ENCODE measurements at regions of chr19 and their contacts with region 1.

Region 1: DNA sequence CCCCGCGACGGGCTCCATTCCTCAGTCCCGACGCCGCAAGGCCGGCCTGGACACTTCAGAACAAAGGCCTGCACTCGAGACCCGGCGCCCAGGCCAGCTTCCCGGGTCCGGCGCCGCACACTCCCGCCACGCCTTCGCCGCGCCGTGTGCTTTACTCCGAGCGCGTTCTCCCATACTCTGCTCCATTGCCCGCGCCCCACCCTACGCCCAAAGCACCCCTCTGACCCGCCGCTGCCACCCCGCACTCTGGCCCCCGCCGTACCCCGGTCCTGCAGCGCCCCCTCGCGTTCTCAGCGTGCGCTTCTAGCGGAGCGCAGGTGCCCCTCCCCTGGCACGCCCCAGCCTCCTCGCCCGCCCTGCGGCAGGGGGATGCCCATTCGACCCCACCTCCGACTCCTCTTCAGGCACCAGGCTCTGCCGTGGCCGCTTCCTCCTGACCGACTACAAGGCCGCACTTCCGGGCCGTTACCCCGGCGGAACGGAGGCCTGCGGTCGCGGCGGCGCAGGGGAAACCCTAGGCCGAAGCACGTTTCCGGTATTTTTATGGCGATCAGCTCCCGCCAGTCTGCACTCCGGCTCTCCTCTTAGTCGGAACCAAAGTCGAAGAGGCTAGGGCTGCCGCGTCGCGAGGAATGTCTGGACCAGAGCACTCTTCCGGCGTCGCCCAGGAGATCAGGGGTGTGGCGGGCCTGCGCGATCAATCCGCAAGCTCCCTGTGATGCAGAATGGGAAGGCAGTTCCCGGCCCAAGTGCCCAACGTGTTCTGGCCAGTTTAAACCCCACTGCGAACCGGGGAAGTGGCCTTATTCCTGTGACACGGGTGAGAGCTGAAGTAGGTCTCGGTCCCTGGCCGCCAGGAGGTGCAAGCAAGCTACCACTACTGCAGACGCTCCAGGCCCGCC is at the start of gene ZBTB45:
- DNase-seq: peak; percentile 73 to 96 (median 87)
- ATAC-seq: peak; percentile 80
- H3K4me3 ChIP-seq: peak within 1 kb of the TSS; percentile 63 to 91
- H3K4me3 Mint-ChIP-seq: peak within 1 kb of the TSS; percentile 95
- H3K27ac ChIP-seq: peak within 1 kb of the TSS; percentile 74 to 90
- H3K27ac Mint-ChIP-seq: peak within 1 kb of the TSS; percentile 97
- H3K4me1 ChIP-seq: peaks cover 23% of the 10 kb centered on the region
- H3K4me1 Mint-ChIP-seq: peaks cover 43% of the 10 kb centered on the region
- H3K27me3 ChIP-seq: no peaks in the 10 kb centered on the region
- H3K27me3 Mint-ChIP-seq: no peaks in the 10 kb centered on the region
- CTCF ChIP-seq: peak; percentile 57
- total RNA-seq, gene ZBTB45: 4.8 to 5.6 TPM

Region 2: GRCh38 chr19:58182989-58183816 is 336.4 kb before region 1 on chr19 and contains the start of gene ZNF274:
- CTCF ChIA-PET with region 1: interaction called, 3 read pairs
- POLR2A ChIA-PET with region 1: interaction called, 5 read pairs
- intact Hi-C with region 1: loop called in 1 of 2 experiments (anchors 1 kb)
- DNase-seq: peak; percentile 88 to 96 (median 94)
- ATAC-seq: peak; percentile 86
- H3K4me3 ChIP-seq: peak within 1 kb of the TSS; percentile 90 to 94
- H3K4me3 Mint-ChIP-seq: peak within 1 kb of the TSS; percentile 91
- H3K27ac ChIP-seq: peak within 1 kb of the TSS; percentile 99 to 100
- H3K27ac Mint-ChIP-seq: peak within 1 kb of the TSS; percentile 100
- H3K4me1 ChIP-seq: peaks cover 9% of the 10 kb centered on the region
- H3K4me1 Mint-ChIP-seq: peaks cover 22% of the 10 kb centered on the region
- H3K27me3 ChIP-seq: no peaks in the 10 kb centered on the region
- H3K27me3 Mint-ChIP-seq: no peaks in the 10 kb centered on the region
- CTCF ChIP-seq: no peak
- total RNA-seq, gene ZNF274: 52.7 to 58.9 TPM

Region 3: DNA sequence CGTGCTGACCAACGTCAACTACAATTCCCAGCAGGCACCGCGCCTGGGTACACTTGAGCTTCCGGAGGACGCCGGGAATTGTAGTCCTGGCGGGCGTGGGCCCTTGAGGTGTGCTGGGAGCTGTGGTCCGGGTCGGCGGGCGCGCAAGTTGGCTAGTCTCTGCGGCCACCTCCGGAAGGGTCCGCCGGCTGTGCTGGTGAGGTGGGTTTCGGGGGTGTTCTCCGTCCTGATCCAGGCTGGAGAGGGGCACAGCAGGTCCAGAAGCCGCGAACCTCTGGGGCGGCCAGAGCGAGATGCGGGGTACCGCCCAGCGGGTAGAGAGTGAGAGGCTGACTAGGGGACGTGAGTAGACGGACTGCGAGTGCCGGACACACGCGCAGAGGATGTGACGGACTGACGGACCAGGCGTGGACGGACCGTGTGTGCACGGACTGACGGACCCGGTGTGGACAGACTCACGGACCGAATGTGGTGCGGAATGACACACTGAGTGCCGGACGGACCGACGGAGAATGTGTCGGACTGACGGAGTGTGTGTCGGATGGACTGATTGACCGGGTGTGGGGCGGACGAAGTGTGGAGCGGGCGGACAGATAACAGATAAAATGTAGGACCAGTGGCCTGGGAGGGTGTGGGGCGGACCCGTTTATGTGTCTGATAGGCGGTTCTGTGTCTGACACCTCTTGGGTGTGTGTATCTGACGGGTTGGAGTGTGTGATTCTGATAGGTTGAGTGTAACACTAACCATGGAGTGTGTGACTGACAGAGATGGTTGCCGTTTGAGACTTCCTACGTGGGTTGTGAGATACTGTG is 192.5 kb before region 1 on chr19 and contains the start of gene ZSCAN22:
- CTCF ChIA-PET with region 1: interaction called, 5 read pairs
- POLR2A ChIA-PET with region 1: interaction called, 4 read pairs
- intact Hi-C with region 1: loop called in 1 of 2 experiments (anchors 1 kb)
- DNase-seq: peak; percentile 76 to 94 (median 89)
- ATAC-seq: peak; percentile 78
- H3K4me3 ChIP-seq: peak within 1 kb of the TSS; percentile 84 to 96
- H3K4me3 Mint-ChIP-seq: no peak within 1 kb of the TSS
- H3K27ac ChIP-seq: peak within 1 kb of the TSS; percentile 77 to 96
- H3K27ac Mint-ChIP-seq: no peak within 1 kb of the TSS
- H3K4me1 ChIP-seq: peaks cover 19% of the 10 kb centered on the region
- H3K4me1 Mint-ChIP-seq: peaks cover 3% of the 10 kb centered on the region
- H3K27me3 ChIP-seq: no peaks in the 10 kb centered on the region
- H3K27me3 Mint-ChIP-seq: no peaks in the 10 kb centered on the region
- CTCF ChIP-seq: no peak
- total RNA-seq, gene ZSCAN22: 1.7 to 2.2 TPM

Region 4: DNA sequence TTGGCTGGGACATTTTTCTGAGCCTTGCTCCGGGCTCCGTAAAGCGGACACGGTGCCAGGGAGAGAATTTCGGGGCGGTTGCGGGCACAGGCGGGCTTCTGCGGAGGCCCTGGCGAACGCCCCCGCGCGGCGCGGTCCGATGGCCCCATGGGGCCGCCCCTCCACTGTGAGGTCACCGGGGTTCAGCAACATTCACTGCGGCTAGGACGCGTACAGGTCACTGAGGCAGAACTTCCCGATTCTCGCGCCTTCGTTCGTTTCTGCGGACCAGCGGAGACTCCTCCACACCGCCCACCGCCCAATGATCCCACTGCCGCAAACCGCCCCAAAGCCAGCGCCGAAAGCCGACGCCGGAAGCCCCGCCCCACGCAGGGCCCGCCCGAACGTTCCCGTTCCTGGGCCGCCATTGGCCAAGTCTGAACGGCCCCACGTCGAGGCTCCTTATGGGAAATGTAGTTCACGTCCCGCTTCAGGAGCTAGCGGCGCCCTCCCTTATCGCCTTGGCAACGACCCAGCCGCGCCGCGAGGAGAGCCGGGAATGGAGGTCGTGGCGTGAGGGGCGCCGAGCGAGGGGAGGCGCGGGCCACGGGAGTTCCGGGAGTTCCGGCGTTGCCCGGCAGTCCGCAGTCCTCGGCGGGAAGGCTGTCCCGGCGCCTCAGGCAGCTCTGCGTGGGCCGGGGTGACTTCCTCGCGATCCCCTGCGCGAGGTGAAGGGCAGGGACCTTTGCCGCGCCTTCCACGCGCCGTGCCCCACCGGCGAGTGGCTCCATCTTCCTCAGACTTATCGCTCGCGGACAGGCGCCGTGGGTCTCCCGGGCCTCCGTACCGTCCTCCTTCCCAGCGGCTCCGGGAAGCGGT is 111.2 kb before region 1 on chr19 and contains the start of gene ZNF584:
- CTCF ChIA-PET with region 1: interaction called, 4 read pairs
- POLR2A ChIA-PET with region 1: no interaction called
- intact Hi-C with region 1: loop called (anchors 1 to 2 kb)
- DNase-seq: peak; percentile 80 to 96 (median 93)
- ATAC-seq: peak; percentile 97
- H3K4me3 ChIP-seq: peak within 1 kb of the TSS; percentile 75 to 79
- H3K4me3 Mint-ChIP-seq: peak within 1 kb of the TSS; percentile 97
- H3K27ac ChIP-seq: peak within 1 kb of the TSS; percentile 67 to 85
- H3K27ac Mint-ChIP-seq: peak within 1 kb of the TSS; percentile 96
- H3K4me1 ChIP-seq: peaks cover 22% of the 10 kb centered on the region
- H3K4me1 Mint-ChIP-seq: peaks cover 33% of the 10 kb centered on the region
- H3K27me3 ChIP-seq: no peaks in the 10 kb centered on the region
- H3K27me3 Mint-ChIP-seq: no peaks in the 10 kb centered on the region
- CTCF ChIP-seq: no peak
- total RNA-seq, gene ZNF584: 1.2 to 1.7 TPM

Region 5: DNA sequence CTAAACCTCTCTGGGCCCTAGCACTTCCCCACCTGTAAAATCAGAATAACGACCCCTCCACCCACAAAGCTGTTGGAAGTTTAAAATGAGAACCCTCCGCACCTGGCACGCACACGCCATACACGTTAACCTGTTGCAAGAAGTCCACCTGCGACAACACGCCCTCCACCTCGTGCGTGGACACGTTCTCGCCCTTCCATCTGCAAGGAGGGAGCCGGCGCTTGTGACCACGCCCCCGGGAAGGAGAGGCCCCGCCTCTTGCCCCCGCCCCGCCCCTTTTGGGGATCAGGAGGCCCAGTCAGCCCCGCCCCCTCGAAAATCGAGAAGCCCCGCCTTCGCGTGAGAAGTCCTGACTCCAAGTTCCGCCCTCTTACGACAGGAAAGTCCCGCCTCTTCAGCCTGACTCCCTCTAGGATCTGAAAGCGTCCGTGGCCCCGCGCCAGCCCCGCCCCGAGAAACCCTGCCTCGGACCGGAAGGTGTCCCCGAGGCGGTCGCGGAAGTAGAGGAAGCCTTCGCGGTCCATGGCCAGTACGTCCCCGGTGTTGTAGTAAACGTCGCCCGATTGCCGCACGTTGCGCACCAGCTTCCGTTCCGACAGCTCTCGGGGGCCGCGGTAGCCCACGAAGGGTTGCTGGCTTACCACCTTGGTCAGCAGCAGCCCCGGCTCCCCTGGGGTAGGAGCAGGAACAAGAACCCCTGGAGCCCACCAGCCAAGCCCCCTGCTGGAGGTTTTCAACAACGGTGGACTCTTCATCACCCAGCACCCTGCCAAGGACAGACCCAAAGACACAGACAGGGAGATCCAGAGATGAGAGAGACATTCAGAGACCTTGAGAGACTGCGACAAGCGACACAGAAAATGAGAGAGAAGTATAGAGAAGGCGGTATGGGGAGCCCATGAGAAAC is 20.3 kb before region 1 on chr19:
- CTCF ChIA-PET with region 1: interaction called, 9 read pairs
- POLR2A ChIA-PET with region 1: interaction called, 10 read pairs
- intact Hi-C with region 1: loop called (anchors 1 kb)
- DNase-seq: peak; percentile 83 to 97 (median 95)
- ATAC-seq: peak; percentile 86
- H3K4me3 ChIP-seq: peak overlapping the region; percentile 64
- H3K4me3 Mint-ChIP-seq: peak overlapping the region; percentile 92
- H3K27ac ChIP-seq: peak overlapping the region; percentile 22 to 88
- H3K27ac Mint-ChIP-seq: peak overlapping the region; percentile 96
- H3K4me1 ChIP-seq: peaks cover 17% of the 10 kb centered on the region
- H3K4me1 Mint-ChIP-seq: peaks cover 25% of the 10 kb centered on the region
- H3K27me3 ChIP-seq: no peaks in the 10 kb centered on the region
- H3K27me3 Mint-ChIP-seq: no peaks in the 10 kb centered on the region
- CTCF ChIP-seq: no peak

Region 6: DNA sequence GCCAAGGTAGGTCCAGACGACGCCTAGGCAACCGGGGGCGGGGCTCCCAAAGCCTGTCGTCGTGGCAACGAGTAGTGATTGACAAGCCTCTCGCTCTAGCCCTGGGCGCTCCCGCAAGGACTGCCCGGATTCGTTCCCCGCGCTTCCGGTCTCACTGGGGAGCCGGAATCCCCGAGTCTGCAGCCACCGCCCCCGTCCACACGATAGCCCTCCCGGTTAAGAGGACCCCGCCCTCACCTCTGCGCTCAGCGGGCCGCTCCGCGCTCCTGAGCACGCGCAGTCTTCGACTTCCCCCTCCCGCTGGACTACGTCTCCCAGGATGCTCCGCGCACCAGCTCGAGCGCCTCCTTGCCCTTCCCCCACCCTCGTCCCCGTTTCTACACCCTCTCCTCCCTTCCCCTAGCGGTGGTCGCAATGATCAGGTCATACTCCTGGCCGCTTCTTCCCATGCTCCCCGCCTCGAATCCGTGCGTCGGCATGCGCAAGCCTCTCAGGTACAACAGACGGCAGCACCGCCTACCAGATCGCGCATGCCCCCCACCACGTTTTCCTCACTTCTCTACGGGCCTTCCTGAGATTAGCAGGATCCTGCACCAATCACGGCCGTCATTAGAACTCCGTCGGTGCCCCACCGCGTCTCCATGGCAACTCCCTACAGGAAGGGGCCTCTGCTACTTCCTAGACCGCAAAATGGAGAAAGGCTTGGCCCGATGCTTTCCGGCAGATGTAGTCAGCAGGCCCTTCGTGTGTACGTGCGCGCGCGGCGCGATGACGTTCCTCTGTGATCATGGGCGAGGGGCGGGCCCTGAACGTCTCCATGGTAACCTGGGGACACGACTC is 53.4 kb after region 1 on chr19 and contains the start of gene MZF1:
- CTCF ChIA-PET with region 1: interaction called, 24 read pairs
- POLR2A ChIA-PET with region 1: interaction called, 17 read pairs
- intact Hi-C with region 1: loop called (anchors 1 to 2 kb)
- DNase-seq: peak; percentile 99 to 100 (median 99)
- ATAC-seq: peak; percentile 70
- H3K4me3 ChIP-seq: peak within 1 kb of the TSS; percentile 83 to 84
- H3K4me3 Mint-ChIP-seq: peak within 1 kb of the TSS; percentile 98
- H3K27ac ChIP-seq: peak within 1 kb of the TSS; percentile 98 to 100
- H3K27ac Mint-ChIP-seq: peak within 1 kb of the TSS; percentile 99
- H3K4me1 ChIP-seq: peaks cover 22% of the 10 kb centered on the region
- H3K4me1 Mint-ChIP-seq: peaks cover 30% of the 10 kb centered on the region
- H3K27me3 ChIP-seq: no peaks in the 10 kb centered on the region
- H3K27me3 Mint-ChIP-seq: no peaks in the 10 kb centered on the region
- CTCF ChIP-seq: no peak
- total RNA-seq, gene MZF1: 14.1 to 15.0 TPM